Naive thymus-derived CD4-positive, alpha-beta T cell (primary cell): ENCODE measurements at regions of chr11 and their contacts with region 1.

Region 1: GRCh38 chr11:122853971-122854446 is 15.7 kb downstream of the CRTAM start:
- DNase-seq: peak in 8 of 9 donors; percentile 27 to 70 (median 63)
- ATAC-seq: no peak
- H3K4me3 ChIP-seq: no peak overlapping the region
- H3K4me3 Mint-ChIP-seq: peak overlapping the region in 3 of 10 donors; percentile 31 to 33 (median 32)
- H3K27ac ChIP-seq: no peak overlapping the region
- H3K27ac Mint-ChIP-seq: peak overlapping the region in 5 of 9 donors; percentile 28 to 67 (median 49)
- H3K4me1 ChIP-seq: peaks cover 21 to 42% of the 10 kb centered on the region in 2 donors
- H3K4me1 Mint-ChIP-seq: peaks cover 25 to 44% (median 32%) of the 10 kb centered on the region in 7 donors
- H3K27me3 ChIP-seq: no peaks in the 10 kb centered on the region
- H3K27me3 Mint-ChIP-seq: peaks cover 0 to 11% (median 0%) of the 10 kb centered on the region in 5 donors

Region 2: GRCh38 chr11:122578168-122578825 is 275.7 kb before region 1 on chr11:
- CTCF ChIA-PET with region 1: interaction called, 7 read pairs
- POLR2A ChIA-PET with region 1: no interaction called
- intact Hi-C with region 1: loop called (anchors 1 kb)
- DNase-seq: no peak
- ATAC-seq: no peak
- H3K4me3 ChIP-seq: no peak overlapping the region
- H3K4me3 Mint-ChIP-seq: no peak overlapping the region
- H3K27ac ChIP-seq: no peak overlapping the region
- H3K27ac Mint-ChIP-seq: no peak overlapping the region
- H3K4me1 ChIP-seq: no peaks in the 10 kb centered on the region
- H3K4me1 Mint-ChIP-seq: peaks cover 5 to 17% (median 11%) of the 10 kb centered on the region in 7 donors
- H3K27me3 ChIP-seq: no peaks in the 10 kb centered on the region
- H3K27me3 Mint-ChIP-seq: peaks cover 0 to 7% (median 0%) of the 10 kb centered on the region in 5 donors

Region 3: GRCh38 chr11:122781378-122782195 is 72.4 kb before region 1 on chr11:
- CTCF ChIA-PET with region 1: interaction called, 248 read pairs
- POLR2A ChIA-PET with region 1: no interaction called
- intact Hi-C with region 1: loop called in 1 of 2 experiments (anchors 1 kb)
- DNase-seq: peak; percentile 50 to 80 (median 69)
- ATAC-seq: peak; percentile 95
- H3K4me3 ChIP-seq: no peak overlapping the region
- H3K4me3 Mint-ChIP-seq: no peak overlapping the region
- H3K27ac ChIP-seq: no peak overlapping the region
- H3K27ac Mint-ChIP-seq: peak overlapping the region in 2 of 9 donors; percentile 14 to 56
- H3K4me1 ChIP-seq: no peaks in the 10 kb centered on the region
- H3K4me1 Mint-ChIP-seq: peaks cover 0 to 22% (median 11%) of the 10 kb centered on the region in 7 donors
- H3K27me3 ChIP-seq: no peaks in the 10 kb centered on the region
- H3K27me3 Mint-ChIP-seq: no peaks in the 10 kb centered on the region

Region 4: DNA sequence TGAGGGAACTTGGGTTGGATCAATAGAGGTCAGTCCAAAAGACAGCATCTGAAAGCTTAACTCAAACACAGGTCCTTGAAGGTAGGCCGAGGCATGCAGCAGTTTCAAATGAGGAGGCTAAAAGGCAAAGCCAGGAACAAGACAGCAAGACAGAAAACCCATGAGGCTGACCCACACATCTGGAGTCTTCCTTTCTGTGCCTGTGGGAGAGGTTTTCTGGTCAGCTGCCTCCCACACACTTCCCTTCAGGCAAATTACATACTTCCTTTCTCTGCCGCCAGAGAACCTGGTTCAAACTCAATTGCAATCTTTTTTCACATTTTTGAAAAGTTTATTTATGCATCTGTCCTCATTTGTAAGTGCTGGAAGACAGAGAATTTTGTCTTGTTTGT is 45.5 kb before region 1 on chr11:
- CTCF ChIA-PET with region 1: interaction called, 65 read pairs
- POLR2A ChIA-PET with region 1: interaction called, 9 read pairs
- intact Hi-C with region 1: loop called in 1 of 2 experiments (anchors 5 kb)
- DNase-seq: peak in 1 of 9 donors; percentile 30
- ATAC-seq: no peak
- H3K4me3 ChIP-seq: no peak overlapping the region
- H3K4me3 Mint-ChIP-seq: peak overlapping the region in 3 of 10 donors; percentile 31 to 46 (median 46)
- H3K27ac ChIP-seq: no peak overlapping the region
- H3K27ac Mint-ChIP-seq: peak overlapping the region in 8 of 9 donors; percentile 19 to 82 (median 70)
- H3K4me1 ChIP-seq: peaks cover 0 to 14% of the 10 kb centered on the region in 2 donors
- H3K4me1 Mint-ChIP-seq: peaks cover 22 to 60% (median 41%) of the 10 kb centered on the region in 7 donors
- H3K27me3 ChIP-seq: no peaks in the 10 kb centered on the region
- H3K27me3 Mint-ChIP-seq: no peaks in the 10 kb centered on the region

Region 5: DNA sequence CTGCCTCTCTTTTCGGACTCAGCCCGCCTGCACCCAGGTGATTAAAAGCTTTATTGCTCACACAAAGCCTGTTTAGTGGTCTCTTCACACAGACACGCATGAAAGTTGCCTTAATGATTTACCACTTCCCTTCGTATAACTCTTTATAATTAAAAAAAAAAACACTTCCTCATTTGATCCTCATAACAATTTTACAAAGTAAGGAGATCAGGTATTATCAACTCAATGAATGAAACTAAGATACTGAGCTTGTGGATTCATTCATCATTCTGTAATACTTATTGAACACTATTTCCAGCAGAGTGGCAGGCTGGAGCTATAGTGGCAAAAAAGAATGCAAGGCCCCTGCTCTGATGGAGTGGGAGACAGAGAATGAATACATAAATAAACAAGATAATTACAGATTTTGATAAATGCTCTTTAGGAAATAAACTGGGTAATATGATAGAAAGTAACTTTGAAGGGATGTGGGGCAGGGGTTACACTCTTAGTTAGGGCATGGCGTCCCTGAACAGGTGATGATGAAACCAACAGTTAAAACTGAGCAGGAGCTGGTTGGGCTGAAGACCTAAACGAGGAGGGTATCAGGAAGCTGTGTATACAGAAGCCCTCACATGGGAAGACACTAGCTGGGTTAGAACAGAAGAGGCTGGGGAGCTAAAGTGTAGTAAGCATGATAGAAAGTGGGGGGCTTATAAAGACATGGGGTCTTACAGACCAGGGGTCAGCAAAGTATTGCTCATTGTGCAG is 21.1 kb before region 1 on chr11:
- CTCF ChIA-PET with region 1: interaction called, 18 read pairs
- POLR2A ChIA-PET with region 1: interaction called, 77 read pairs
- intact Hi-C with region 1: loop called in 1 of 2 experiments (anchors 2 kb)
- DNase-seq: no peak
- ATAC-seq: no peak
- H3K4me3 ChIP-seq: no peak overlapping the region
- H3K4me3 Mint-ChIP-seq: peak overlapping the region in 3 of 10 donors; percentile 8 to 35 (median 20)
- H3K27ac ChIP-seq: no peak overlapping the region
- H3K27ac Mint-ChIP-seq: peak overlapping the region in 6 of 9 donors; percentile 5 to 67 (median 32)
- H3K4me1 ChIP-seq: peaks cover 0 to 14% of the 10 kb centered on the region in 2 donors
- H3K4me1 Mint-ChIP-seq: peaks cover 0 to 24% (median 18%) of the 10 kb centered on the region in 7 donors
- H3K27me3 ChIP-seq: no peaks in the 10 kb centered on the region
- H3K27me3 Mint-ChIP-seq: peaks cover 0 to 10% (median 0%) of the 10 kb centered on the region in 5 donors

Region 6: DNA sequence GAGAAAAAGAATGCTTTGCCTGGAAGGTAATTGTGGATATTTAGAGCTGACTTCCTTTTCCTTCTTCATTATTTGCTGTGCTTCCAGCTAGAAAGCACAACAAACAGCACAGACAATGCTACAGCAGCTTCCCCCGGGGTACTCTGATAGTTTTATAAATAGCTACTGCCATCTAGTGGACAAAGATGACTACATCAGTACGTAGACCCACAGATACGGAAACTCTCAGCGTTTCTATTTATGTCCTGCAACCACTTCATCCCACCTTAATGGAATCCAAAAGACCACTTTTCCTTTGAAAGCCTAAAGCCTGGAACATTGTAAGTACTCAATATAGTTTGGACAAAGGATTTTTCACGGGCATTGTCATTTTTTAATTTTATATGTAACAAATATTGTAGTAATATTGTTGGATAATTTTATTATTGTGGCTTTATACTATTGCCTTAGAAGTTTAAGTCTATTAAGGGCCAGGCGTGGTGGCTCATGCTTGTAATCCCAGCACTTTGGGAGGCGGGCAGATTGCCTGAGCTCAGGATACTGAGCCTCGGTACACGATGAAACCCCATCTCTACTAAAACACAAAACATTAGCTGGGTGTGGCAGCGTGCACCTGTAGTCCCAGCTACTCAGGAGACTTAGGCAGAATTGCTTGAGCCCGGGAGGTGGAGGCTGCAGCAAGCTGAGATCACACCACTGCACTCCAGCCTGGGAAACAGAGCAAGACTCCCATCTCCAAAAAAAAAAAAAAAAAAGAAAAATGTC is 200.5 kb after region 1 on chr11:
- CTCF ChIA-PET with region 1: interaction called, 15 read pairs
- POLR2A ChIA-PET with region 1: interaction called, 20 read pairs
- intact Hi-C with region 1: no loop called
- DNase-seq: peak in 7 of 9 donors; percentile 52 to 75 (median 67)
- ATAC-seq: peak; percentile 87
- H3K4me3 ChIP-seq: peak overlapping the region; percentile 11
- H3K4me3 Mint-ChIP-seq: peak overlapping the region in 9 of 10 donors; percentile 20 to 100 (median 65)
- H3K27ac ChIP-seq: peak overlapping the region; percentile 38
- H3K27ac Mint-ChIP-seq: peak overlapping the region; percentile 69 to 100 (median 92)
- H3K4me1 ChIP-seq: peaks cover 50 to 56% of the 10 kb centered on the region in 2 donors
- H3K4me1 Mint-ChIP-seq: peaks cover 42 to 60% (median 55%) of the 10 kb centered on the region in 7 donors
- H3K27me3 ChIP-seq: no peaks in the 10 kb centered on the region
- H3K27me3 Mint-ChIP-seq: no peaks in the 10 kb centered on the region

Region 7: DNA sequence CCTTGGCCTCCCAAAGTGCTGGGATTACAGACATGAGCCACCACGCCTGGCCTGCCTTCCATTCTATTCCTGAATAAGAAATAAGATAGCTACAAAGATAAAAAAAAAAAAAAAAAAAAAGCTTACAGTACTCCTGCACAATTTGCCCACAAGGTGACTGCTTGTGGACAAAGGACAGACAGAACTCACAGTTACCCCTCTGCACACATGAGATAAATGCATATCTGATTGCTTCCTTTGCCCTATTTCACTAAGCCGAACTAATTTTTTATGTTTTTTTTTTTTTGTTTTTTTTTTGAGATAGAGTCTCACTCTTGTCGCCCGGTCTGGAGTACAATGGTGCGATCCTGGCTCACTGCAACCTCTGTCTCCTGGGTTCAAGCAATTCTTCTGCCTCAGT is 231.5 kb after region 1 on chr11:
- CTCF ChIA-PET with region 1: no interaction called
- POLR2A ChIA-PET with region 1: no interaction called
- intact Hi-C with region 1: no loop called
- DNase-seq: no peak
- ATAC-seq: no peak
- H3K4me3 ChIP-seq: no peak overlapping the region
- H3K4me3 Mint-ChIP-seq: no peak overlapping the region
- H3K27ac ChIP-seq: no peak overlapping the region
- H3K27ac Mint-ChIP-seq: peak overlapping the region in 7 of 9 donors; percentile 41 to 98 (median 89)
- H3K4me1 ChIP-seq: peaks cover 27 to 47% of the 10 kb centered on the region in 2 donors
- H3K4me1 Mint-ChIP-seq: peaks cover 32 to 74% (median 53%) of the 10 kb centered on the region in 7 donors
- H3K27me3 ChIP-seq: no peaks in the 10 kb centered on the region
- H3K27me3 Mint-ChIP-seq: no peaks in the 10 kb centered on the region